ENCODE measurements at regions of chr6 and their contacts with region 1.

Region 1: GRCh38 chr6:134436281-134436815 is 118.4 kb upstream of the SGK1 start:
- ATAC-seq: peak; percentile 99 to 100 (median 100)
- H3K4me3 ChIP-seq: no peak overlapping the region
- H3K27ac ChIP-seq: no peak overlapping the region
- H3K4me1 ChIP-seq: peaks cover 0 to 9% of the 10 kb centered on the region in 2 donors

Region 2: GRCh38 chr6:134640975-134641429 is 204.7 kb after region 1 on chr6:
- in situ Hi-C with region 1: loop called in 1 of 9 experiments (anchors 25 kb)
- ATAC-seq: peak; percentile 44 to 85 (median 64)
- H3K4me3 ChIP-seq: no peak overlapping the region
- H3K27ac ChIP-seq: no peak overlapping the region
- H3K4me1 ChIP-seq: no peaks in the 10 kb centered on the region

Region 3: GRCh38 chr6:134822920-134823709 is 386.8 kb after region 1 on chr6:
- in situ Hi-C with region 1: loop called in 1 of 9 experiments (anchors 25 kb)
- ATAC-seq: peak; percentile 71 to 100 (median 96)
- H3K4me3 ChIP-seq: no peak overlapping the region
- H3K27ac ChIP-seq: no peak overlapping the region
- H3K4me1 ChIP-seq: no peaks in the 10 kb centered on the region